AG04450 (cell line): ENCODE measurements at regions of chr2 and their contacts with region 1.

Region 1: DNA sequence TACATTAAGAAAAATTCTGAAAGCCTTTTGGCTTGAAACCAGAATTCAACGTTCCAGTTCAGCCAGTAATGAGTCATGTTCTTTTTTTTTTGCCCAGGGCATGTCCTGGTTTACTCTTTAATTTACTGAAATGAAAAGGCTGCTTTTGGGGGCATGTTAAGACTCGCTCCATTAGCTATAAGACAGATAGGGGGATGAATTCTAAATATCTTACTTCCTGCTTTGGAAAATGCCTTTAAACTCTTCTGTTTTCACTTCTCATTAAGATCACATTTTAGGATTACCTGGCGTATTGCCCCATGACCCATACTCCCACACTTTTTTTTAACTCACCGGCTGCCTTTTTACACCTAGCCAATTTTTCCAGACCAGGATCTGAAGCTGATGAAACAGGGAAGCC is 619 bp downstream of the ABCA12 start:
- DNase-seq: no peak
- H3K4me3 ChIP-seq: no peak overlapping the region
- H3K27ac ChIP-seq: no peak overlapping the region
- H3K27me3 ChIP-seq: no peaks in the 10 kb centered on the region
- CTCF ChIP-seq: no peak

Region 2: GRCh38 chr2:216092646-216093045 is 954.8 kb after region 1 on chr2:
- CTCF ChIA-PET with region 1: interaction called, 10 read pairs
- POLR2A ChIA-PET with region 1: no interaction called
- DNase-seq: no peak
- H3K4me3 ChIP-seq: no peak overlapping the region
- H3K27ac ChIP-seq: no peak overlapping the region
- H3K27me3 ChIP-seq: peaks cover 5% of the 10 kb centered on the region
- CTCF ChIP-seq: no peak